PC-3 (cell line): ENCODE measurements at regions of chr20 and their contacts with region 1.

Region 1: GRCh38 chr20:4457566-4458543 is 263.9 kb upstream of the PRND start:
- DNase-seq: peak; percentile 93
- ATAC-seq: peak; percentile 75
- H3K4me3 ChIP-seq: peak overlapping the region; percentile 21; the same call in 1 of the 2 replicates
- H3K27ac ChIP-seq: peak overlapping the region; percentile 84
- H3K4me1 ChIP-seq: peaks cover 52% of the 10 kb centered on the region
- H3K27me3 ChIP-seq: no peaks in the 10 kb centered on the region
- CTCF ChIP-seq: no peak

Region 2: DNA sequence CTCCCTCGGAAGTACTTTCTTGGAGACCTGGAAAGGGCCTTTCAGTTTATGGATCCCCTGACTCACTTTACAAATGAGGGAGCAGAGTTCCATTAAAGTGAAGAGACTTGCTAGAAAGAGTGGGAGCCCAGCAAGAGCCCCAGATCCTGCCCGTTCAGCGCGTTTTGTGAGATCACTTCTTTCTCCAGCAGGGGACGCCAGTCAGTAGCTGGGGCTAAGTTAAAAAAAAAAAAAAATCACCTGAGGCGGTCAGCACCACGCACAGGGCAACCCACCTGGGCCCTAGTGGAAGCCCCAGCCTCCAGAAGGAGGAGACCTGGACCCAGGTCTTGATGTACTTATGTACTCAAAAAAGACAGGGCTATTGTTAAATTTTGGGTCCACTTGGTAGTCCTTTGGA is 168.0 kb before region 1 on chr20:
- CTCF ChIA-PET with region 1: no interaction called
- POLR2A ChIA-PET with region 1: no interaction called
- intact Hi-C with region 1: no loop called
- DNase-seq: peak; percentile 6
- ATAC-seq: no peak
- H3K4me3 ChIP-seq: no peak overlapping the region
- H3K27ac ChIP-seq: no peak overlapping the region
- H3K4me1 ChIP-seq: no peaks in the 10 kb centered on the region
- H3K27me3 ChIP-seq: no peaks in the 10 kb centered on the region
- CTCF ChIP-seq: peak; percentile 59

Region 3: DNA sequence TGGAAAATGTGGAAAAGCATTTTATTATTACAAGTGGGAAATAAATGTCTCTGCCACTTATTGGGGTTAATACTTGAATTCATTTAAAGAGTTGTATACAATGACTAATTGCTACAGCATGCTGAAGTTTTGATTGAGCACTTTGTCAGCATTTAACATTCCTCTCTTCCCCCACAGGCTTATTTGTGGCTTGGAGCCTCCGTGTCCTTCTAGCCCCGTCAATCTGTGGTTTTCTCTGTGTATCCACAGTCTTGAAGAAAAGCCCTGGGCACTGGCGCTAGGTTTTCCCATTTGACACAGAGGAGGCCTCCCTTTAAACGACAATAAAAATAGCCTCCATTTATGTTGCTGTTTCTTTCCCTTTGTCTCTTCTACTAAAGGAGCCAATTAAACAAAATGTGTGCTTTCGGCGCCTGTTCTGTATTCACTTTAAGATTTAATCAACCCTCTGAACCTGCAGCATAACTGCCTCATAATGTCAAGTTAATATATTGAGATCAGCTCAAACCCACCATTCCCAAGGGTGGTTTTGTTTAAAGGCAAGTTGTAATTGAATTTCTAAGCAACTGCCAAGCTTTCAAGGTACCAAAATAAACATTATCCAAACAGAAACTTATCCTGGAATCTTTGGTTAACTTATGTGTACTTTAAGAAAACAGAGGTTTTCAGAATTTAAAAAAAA is 115.9 kb before region 1 on chr20:
- CTCF ChIA-PET with region 1: no interaction called
- POLR2A ChIA-PET with region 1: no interaction called
- intact Hi-C with region 1: no loop called
- DNase-seq: peak; percentile 75
- ATAC-seq: peak; percentile 92
- H3K4me3 ChIP-seq: no peak overlapping the region
- H3K27ac ChIP-seq: no peak overlapping the region
- H3K4me1 ChIP-seq: peaks cover 10% of the 10 kb centered on the region
- H3K27me3 ChIP-seq: no peaks in the 10 kb centered on the region
- CTCF ChIP-seq: no peak

Region 4: GRCh38 chr20:4592316-4593148 is 134.7 kb after region 1 on chr20:
- CTCF ChIA-PET with region 1: no interaction called
- POLR2A ChIA-PET with region 1: no interaction called
- intact Hi-C with region 1: loop called (anchors 5 kb)
- DNase-seq: peak; percentile 84
- ATAC-seq: peak; percentile 75
- H3K4me3 ChIP-seq: peak overlapping the region; percentile 66
- H3K27ac ChIP-seq: peak overlapping the region; percentile 64
- H3K4me1 ChIP-seq: peaks cover 14% of the 10 kb centered on the region
- H3K27me3 ChIP-seq: no peaks in the 10 kb centered on the region
- CTCF ChIP-seq: peak; percentile 97